ENCODE measurements at regions of chr3 and their contacts with region 1.

Region 1: DNA sequence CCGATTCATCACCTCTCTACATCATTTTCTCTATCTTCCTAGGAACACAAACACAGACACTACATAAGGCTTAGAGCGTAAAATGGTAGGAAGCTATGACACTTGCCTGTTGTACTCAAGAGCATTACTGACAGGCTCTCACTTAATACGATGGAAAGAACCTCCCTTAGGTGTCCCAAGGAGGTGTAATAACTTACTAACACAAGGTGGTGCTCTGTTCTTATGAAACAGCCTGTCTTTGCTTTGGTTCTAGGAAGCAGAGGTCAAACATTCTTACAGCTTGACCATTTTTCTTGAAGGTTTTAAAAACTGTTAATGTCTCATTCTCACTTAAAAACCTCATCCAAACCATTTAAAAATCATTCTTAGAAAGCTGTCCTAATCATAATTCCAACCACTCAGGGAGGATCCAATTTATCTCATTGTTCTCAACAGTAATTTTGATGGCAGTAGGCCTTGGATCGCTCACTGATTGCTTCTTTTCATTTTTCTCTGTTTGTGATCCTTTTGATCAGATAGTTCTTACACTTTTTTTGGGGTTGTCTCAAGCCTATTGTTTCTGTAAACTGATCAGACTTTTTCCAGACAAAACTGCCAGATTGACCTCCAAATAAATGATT is 317.8 kb upstream of the AGTR1 start:
- DNase-seq: peak; percentile 69
- ATAC-seq: peak; percentile 91
- H3K4me3 ChIP-seq: no peak overlapping the region
- H3K27ac ChIP-seq: no peak overlapping the region
- H3K4me1 ChIP-seq: no peaks in the 10 kb centered on the region
- H3K27me3 ChIP-seq: no peaks in the 10 kb centered on the region
- CTCF ChIP-seq: peak; percentile 63
- POLR2A ChIP-seq: no peak
- RAD21 ChIP-seq: peak; percentile 77

Region 2: DNA sequence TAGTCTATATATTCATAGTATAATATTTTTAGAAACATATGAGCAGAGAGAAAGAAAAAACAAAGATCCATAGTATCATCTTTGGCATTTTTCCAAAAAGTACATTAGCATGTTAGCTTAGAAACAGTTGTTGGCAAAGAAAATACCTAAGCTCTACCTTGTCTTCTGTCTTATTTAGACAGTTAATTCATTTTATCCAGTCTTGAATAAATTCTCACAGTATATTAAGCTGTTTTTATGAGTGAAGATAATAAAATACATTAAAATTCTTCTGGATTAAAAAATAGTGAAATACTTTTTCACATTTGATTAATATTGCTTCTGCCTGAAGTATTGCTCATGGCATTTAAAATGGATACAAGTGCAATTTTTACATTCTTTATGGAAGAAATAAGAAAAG is 825.5 kb before region 1 on chr3:
- CTCF ChIA-PET with region 1: no interaction called
- POLR2A ChIA-PET with region 1: no interaction called
- dilution Hi-C with region 1: no loop called
- in situ Hi-C with region 1: no loop called
- intact Hi-C with region 1: no loop called
- DNase-seq: no peak
- ATAC-seq: no peak
- H3K4me3 ChIP-seq: no peak overlapping the region
- H3K27ac ChIP-seq: no peak overlapping the region
- H3K4me1 ChIP-seq: no peaks in the 10 kb centered on the region
- H3K27me3 ChIP-seq: no peaks in the 10 kb centered on the region
- CTCF ChIP-seq: no peak
- POLR2A ChIP-seq: no peak
- RAD21 ChIP-seq: no peak

Region 3: DNA sequence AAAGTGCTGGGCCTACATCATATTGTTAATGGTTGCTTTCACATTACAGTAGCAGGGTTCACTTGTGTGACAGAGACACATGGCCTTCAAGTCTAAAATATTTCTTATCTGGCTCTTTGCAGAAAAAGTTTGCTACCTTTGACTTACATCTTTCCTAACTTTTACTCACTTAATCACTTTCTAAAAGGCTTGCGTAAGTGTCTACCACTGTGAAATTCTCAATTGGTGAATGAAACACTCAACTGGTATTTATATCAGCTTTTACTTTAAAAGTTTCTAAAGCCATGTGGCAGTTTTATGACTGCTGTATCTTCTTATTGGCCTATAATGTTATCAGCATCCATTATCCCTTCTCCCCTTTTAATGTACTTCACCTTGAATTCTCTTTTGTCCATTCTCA is 416.2 kb before region 1 on chr3:
- CTCF ChIA-PET with region 1: no interaction called
- POLR2A ChIA-PET with region 1: no interaction called
- dilution Hi-C with region 1: no loop called
- in situ Hi-C with region 1: no loop called
- intact Hi-C with region 1: no loop called
- DNase-seq: no peak
- ATAC-seq: no peak
- H3K4me3 ChIP-seq: no peak overlapping the region
- H3K27ac ChIP-seq: no peak overlapping the region
- H3K4me1 ChIP-seq: no peaks in the 10 kb centered on the region
- H3K27me3 ChIP-seq: no peaks in the 10 kb centered on the region
- CTCF ChIP-seq: no peak
- POLR2A ChIP-seq: no peak
- RAD21 ChIP-seq: no peak

Region 4: DNA sequence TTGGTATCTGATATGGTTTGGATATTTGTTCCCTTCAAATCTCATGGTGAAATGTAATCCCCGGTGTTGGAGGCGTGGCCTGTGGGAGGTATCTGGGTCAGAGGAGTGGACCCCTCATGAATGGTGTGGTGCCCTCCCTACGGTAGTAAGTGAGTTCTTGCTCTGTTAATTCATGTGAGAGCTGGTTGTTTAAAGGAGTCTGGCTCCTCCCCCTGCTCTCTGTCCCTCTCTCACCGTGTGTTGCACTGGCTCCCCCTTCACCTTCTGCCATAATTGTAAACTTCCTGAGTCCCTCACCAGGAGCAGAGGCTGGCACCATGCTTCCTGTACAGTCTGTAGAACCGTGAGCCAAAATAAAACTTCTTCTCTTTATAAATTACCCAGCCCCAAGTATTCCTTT is 70.9 kb after region 1 on chr3:
- CTCF ChIA-PET with region 1: no interaction called
- POLR2A ChIA-PET with region 1: no interaction called
- dilution Hi-C with region 1: no loop called
- in situ Hi-C with region 1: no loop called
- intact Hi-C with region 1: no loop called
- DNase-seq: no peak
- ATAC-seq: no peak
- H3K4me3 ChIP-seq: no peak overlapping the region
- H3K27ac ChIP-seq: no peak overlapping the region
- H3K4me1 ChIP-seq: no peaks in the 10 kb centered on the region
- H3K27me3 ChIP-seq: no peaks in the 10 kb centered on the region
- CTCF ChIP-seq: no peak
- POLR2A ChIP-seq: no peak
- RAD21 ChIP-seq: no peak

Region 5: DNA sequence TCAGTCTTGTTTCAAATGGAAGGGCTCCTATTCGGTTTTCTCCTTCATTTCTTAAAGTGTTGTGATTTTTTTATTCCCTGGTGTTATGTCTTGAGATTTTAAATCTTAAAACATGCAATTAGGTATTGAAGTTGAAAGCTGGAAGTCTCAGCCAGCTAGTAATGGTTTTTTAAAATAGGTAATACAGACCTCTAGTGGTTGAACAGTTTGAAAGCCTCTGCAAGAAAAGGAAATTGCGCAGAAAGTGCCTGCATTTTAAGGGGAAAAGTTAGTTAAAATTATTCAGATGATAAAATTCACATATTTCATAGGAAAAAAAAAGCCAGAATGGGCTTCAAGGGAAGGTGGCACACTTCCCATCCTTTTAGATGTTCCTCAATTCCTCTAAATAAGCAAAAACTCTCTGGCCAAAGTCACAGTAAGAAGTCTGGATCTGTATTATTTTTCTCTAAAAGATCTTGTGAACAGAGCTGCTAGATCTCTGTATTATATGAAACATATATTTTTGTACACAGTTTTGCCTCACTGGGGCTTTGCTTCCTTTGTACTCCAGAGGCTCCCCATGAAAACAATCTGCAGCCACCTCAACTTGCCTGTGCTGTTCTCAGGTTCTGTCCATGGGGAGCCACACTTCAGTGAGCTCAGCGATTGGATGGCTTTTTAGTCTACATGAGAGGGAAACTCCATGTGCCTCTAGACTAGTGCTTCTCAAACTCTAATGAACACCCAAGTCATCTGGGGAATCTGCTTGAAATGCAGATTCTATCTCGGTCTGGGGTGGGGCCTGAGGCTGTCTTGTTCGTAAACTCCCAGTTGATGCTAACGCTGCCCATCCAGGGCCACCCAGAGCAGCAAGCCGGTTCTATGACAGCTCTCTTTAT is 339.3 kb after region 1 on chr3:
- CTCF ChIA-PET with region 1: interaction called, 11 read pairs
- POLR2A ChIA-PET with region 1: no interaction called
- dilution Hi-C with region 1: no loop called
- in situ Hi-C with region 1: loop called (anchors 5 kb)
- intact Hi-C with region 1: loop called (anchors 1 kb)
- DNase-seq: peak; percentile 32
- ATAC-seq: 0 out of 2 replicates have a peak, but pooled peaks have one; percentile 46
- H3K4me3 ChIP-seq: no peak overlapping the region
- H3K27ac ChIP-seq: no peak overlapping the region
- H3K4me1 ChIP-seq: no peaks in the 10 kb centered on the region
- H3K27me3 ChIP-seq: no peaks in the 10 kb centered on the region
- CTCF ChIP-seq: peak; percentile 54
- POLR2A ChIP-seq: no peak
- RAD21 ChIP-seq: peak; percentile 43

Region 6: GRCh38 chr3:148796793-148797192 is 416.9 kb after region 1 on chr3:
- CTCF ChIA-PET with region 1: no interaction called
- POLR2A ChIA-PET with region 1: no interaction called
- dilution Hi-C with region 1: no loop called
- in situ Hi-C with region 1: no loop called
- intact Hi-C with region 1: no loop called
- DNase-seq: no peak
- ATAC-seq: no peak
- H3K4me3 ChIP-seq: no peak overlapping the region
- H3K27ac ChIP-seq: no peak overlapping the region
- H3K4me1 ChIP-seq: no peaks in the 10 kb centered on the region
- H3K27me3 ChIP-seq: no peaks in the 10 kb centered on the region
- CTCF ChIP-seq: no peak
- POLR2A ChIP-seq: no peak
- RAD21 ChIP-seq: no peak

Region 7: DNA sequence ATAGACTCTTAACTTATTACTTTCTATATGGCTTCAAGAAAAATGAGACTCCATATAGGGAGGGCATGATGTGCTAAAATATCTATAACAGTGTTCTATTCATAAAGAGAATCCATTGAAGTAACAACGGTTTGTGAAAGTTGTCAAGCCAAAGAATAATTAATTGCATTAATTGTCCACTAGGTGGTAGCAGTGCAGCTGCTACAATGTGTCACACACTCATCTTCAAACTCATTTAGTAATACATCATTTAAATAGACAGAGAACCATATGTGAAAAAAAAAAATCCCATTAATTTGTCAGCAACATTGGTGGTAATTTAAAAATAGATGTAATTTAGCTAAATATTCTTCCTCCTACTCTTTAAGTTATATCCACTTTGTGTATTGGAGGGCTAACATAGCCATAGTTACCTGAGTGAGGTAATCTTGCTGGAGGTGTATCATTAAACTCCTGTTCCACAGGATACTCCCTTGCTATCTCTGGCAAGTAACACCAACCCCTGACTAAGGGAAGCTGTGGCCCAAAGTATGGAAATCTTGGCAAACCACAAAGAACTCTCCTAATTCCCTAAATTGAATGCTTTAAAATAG is 481.5 kb after region 1 on chr3:
- CTCF ChIA-PET with region 1: interaction called, 9 read pairs
- POLR2A ChIA-PET with region 1: no interaction called
- dilution Hi-C with region 1: no loop called
- in situ Hi-C with region 1: no loop called
- intact Hi-C with region 1: loop called (anchors 1 kb)
- DNase-seq: peak; percentile 54
- ATAC-seq: peak; percentile 77
- H3K4me3 ChIP-seq: no peak overlapping the region
- H3K27ac ChIP-seq: no peak overlapping the region
- H3K4me1 ChIP-seq: no peaks in the 10 kb centered on the region
- H3K27me3 ChIP-seq: peaks cover 5% of the 10 kb centered on the region
- CTCF ChIP-seq: peak; percentile 69
- POLR2A ChIP-seq: no peak
- RAD21 ChIP-seq: peak; percentile 84

Measured in IMR-90 (cell line).